GM10248 (cell line): ENCODE measurements at regions of chr2 and their contacts with region 1.

Region 1: DNA sequence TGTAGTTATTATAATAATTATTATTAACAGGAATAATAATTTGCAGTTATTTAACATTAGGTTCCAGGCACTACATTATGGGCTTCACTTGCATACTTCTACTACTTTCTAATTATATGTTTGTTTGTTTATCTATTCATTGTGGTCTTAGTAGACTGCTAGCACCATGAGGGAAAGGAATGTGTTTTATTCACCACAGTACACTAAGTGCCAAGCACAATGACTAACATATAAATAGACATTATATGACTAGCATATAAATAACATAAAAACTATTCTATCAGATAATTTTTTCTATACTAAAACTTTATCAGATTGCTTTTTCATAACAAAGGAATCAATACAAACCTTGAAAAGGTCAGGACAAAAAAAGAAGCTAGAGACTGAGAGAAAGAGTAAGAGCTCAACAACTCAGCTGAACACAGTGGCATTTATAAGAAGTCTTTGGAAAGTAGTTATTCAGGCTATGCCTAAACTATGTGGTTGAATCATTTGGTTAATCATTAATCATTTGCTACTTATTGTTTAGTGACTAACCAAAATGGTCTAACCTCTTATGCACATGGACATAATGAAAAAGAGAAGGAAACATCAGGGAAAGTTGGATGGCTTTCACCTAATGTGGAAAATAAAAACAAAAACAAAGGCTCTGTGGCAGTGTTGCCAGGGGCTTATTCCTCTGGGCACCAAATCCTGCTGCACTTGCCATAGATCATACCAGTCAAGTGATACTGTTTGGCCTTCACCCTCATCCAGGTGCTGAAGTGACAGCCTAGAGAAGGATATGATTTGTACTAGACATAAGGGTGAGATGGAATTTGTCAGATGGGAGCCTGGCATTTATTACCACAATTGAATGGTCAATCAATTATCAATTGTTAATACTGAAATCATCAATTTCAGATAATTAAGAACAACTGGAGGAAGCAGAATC is 174.9 kb downstream of the ETAA1 start:
- DNase-seq: no peak
- CTCF ChIP-seq: no peak

Region 2: DNA sequence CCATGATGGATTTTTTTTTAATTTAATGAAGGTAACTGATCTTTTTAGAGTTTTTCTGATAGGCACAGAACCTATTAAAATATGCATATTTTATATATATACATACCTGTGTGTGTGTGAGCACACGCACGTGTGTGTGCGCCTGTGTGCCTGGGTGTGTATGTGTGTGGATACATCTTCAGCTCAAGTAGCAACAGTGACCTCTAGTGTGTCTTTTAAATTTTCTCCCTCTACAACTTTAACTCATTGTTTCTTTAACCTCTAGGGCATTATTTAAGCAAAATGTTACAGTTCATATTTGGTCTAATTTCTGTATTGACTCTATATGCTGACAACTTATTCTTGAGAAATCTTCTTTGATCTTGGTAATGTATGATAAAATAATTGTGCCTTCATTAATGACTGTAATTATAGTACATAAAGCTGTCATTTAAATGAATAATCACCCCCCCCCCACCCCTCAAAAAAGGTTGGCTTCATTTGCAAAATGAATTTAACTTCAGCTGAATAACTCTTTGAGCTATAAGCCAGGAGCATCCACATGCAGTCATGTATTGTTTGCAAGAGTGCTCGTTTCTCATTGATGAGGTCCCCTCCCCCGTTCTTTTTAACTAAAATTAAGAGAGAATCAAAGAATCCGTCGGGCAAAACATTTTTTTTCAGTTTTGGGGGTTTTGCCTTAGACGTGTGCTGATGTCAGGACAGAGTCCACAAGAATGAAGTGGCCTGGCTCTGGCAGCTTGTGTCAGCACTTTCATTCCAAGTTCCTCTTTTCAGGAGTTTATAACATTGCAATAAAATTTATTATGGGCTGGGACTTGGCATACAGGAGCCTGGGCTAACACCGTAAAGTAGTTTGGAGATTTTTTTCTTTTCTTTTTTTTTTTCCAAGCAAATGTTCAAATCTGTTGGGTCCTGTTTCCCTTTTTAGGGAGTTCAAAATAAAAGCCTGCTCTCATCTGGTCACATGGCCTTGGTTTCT is 95.0 kb before region 1 on chr2:
- CTCF ChIA-PET with region 1: no interaction called
- POLR2A ChIA-PET with region 1: no interaction called
- DNase-seq: no peak
- CTCF ChIP-seq: no peak

Region 3: GRCh38 chr2:67561457-67561965 is 10.5 kb before region 1 on chr2:
- CTCF ChIA-PET with region 1: interaction called, 10 read pairs
- POLR2A ChIA-PET with region 1: no interaction called
- DNase-seq: no peak
- CTCF ChIP-seq: no peak